ENCODE measurements at regions of chr12 and their contacts with region 1.

Region 1: GRCh38 chr12:78863482-78864402 is 832 bp upstream of the SYT1 start:
- DNase-seq: no peak
- ATAC-seq: no peak
- H3K4me3 ChIP-seq: peak overlapping the region in 1 of 2 donors; percentile 23
- H3K4me3 Mint-ChIP-seq: peak overlapping the region in 1 of 3 donors; percentile 39
- H3K27ac ChIP-seq: no peak overlapping the region
- H3K27ac Mint-ChIP-seq: no peak overlapping the region
- H3K4me1 ChIP-seq: no peaks in the 10 kb centered on the region
- H3K4me1 Mint-ChIP-seq: no peaks in the 10 kb centered on the region
- H3K27me3 ChIP-seq: peaks cover 12 to 14% of the 10 kb centered on the region in 2 experiments
- H3K27me3 Mint-ChIP-seq: peaks cover 14 to 16% of the 10 kb centered on the region in 2 donors

Region 2: DNA sequence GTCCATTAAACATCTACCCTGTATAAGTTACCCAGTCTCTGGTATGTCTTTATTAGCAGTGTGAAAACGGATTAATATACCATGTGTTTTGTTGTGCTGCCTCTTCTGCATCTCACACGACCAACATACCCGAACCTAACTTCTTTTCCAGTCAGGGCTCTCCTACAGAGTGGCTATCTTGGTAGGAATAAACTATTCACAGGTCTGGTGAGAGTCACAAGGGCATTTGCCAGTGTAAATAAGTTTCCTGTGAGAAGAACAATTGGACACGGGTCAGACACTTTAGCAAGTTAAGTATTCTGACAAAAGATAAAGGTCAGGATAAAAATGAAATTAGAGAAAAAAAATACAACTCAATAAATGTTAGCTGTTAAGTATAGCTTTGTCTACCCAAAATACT is 1913.8 kb after region 1 on chr12:
- CTCF ChIA-PET with region 1: interaction called in 1 of 2 experiments, 17 read pairs
- POLR2A ChIA-PET with region 1: no interaction called
- DNase-seq: no peak
- ATAC-seq: no peak
- H3K4me3 ChIP-seq: no peak overlapping the region
- H3K4me3 Mint-ChIP-seq: no peak overlapping the region
- H3K27ac ChIP-seq: no peak overlapping the region
- H3K27ac Mint-ChIP-seq: no peak overlapping the region
- H3K4me1 ChIP-seq: no peaks in the 10 kb centered on the region
- H3K4me1 Mint-ChIP-seq: no peaks in the 10 kb centered on the region
- H3K27me3 ChIP-seq: no peaks in the 10 kb centered on the region
- H3K27me3 Mint-ChIP-seq: no peaks in the 10 kb centered on the region

Measured in T-cell (primary cell).